ENCODE measurements at regions of chr6 and their contacts with region 1.

Region 1: DNA sequence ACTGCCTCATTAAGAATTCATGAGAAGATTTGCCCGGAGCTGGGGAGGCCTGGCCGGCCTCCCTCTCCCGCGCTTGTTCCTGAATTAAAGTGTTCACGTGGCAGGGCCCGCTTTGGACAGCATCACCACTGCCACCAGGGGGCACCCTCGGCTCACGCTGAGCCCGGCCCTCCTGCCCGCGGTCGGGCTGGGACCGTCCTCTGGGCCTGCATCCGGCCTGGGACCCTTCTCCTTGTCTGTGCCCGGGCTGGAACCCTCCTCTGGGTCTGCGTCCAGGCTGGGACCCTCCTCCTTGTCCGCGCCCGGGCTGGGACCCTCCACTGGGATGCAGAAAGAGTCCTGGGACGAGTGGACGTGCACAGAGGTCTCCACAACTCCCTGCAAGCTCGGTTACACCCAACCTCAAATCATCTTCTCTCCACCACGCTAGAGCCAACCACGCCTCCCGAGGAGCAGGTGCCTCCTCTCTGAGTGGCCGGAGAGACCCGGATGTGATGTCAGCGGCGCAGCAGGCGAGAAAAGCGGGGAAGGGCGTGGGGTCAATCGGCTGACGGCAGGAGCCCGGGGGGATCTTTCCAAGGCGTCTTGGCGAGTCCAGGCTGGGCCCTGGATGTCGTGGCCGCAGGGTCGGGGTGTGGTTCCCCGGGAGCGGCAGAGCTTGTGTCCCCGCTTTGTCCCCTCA is 50.9 kb upstream of the DACT2 start:
- DNase-seq: peak; percentile 50 to 72
- ATAC-seq: peak; percentile 82 to 99; a peak in 5 of 6 replicates
- H3K4me3 ChIP-seq: no peak overlapping the region
- H3K27ac ChIP-seq: no peak overlapping the region
- H3K4me1 ChIP-seq: no peaks in the 10 kb centered on the region
- CTCF ChIP-seq: peak; percentile 71
- EP300 ChIP-seq: no peak
- POLR2A ChIP-seq: no peak
- RAD21 ChIP-seq: peak; percentile 85 to 87

Region 2: DNA sequence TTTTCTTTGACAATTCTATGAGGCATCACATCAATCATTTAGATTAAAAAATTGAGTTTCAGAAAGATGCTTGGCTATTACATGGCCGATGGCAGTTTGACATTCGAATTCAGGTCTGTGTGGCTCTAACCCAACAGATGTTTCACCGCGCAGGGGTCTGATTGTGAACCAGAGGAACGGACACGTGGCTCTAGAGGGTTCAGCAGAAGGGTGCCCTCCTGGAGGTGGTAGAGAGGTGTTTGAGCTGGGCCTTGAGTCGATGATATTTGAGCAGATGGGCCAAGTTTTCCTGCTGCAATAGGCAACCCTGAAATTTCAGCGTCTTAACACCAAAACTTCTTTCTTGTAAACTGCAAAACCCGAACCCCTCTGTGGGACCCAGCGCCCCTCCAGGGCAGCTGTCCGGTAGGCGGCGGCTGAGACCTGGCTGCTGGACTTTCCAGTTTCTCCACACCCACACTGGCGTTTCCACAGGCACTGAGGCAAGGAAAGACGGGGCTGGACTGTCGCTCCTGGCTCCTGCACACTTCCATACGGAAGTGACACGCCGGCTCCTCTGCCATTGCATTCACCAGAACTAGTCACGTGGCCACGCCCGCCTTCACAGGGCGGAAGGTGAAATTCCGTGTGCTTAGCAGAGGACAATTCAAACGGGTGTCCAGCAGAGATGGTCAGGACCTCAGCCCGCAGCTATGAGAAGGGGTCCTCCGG is 555.0 kb before region 1 on chr6:
- CTCF ChIA-PET with region 1: no interaction called
- POLR2A ChIA-PET with region 1: no interaction called
- DNase-seq: no peak
- ATAC-seq: no peak
- H3K4me3 ChIP-seq: no peak overlapping the region
- H3K27ac ChIP-seq: no peak overlapping the region
- H3K4me1 ChIP-seq: no peaks in the 10 kb centered on the region
- CTCF ChIP-seq: no peak
- EP300 ChIP-seq: no peak
- POLR2A ChIP-seq: no peak
- RAD21 ChIP-seq: no peak

Region 3: DNA sequence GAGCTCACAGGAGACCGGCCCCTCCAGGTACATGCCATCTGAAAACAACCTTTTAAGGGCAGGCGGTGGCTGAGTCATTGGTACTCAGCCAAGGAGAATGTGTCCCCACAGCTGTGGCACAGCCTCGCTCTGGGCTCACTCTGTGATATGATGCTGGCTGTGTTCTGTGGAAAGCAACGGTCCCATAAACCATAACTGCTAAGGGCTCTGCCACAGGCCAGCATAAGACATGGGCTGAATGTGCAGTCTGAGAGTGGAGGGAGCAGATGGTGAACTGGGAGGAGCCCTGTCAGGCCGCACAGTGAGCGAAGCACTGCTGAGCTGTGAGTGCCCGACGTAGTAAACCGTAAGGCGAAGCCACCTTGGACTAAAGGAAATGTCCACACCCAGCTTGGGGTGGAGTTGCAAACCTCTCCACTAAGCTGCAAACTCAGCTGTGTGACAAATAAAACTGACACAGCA is 507.4 kb after region 1 on chr6:
- CTCF ChIA-PET with region 1: interaction called, 34 read pairs
- POLR2A ChIA-PET with region 1: no interaction called
- DNase-seq: peak in 1 of 2 experiments; percentile 13
- ATAC-seq: peak; percentile 62 to 70; a peak in 5 of 6 replicates
- H3K4me3 ChIP-seq: no peak overlapping the region
- H3K27ac ChIP-seq: no peak overlapping the region
- H3K4me1 ChIP-seq: no peaks in the 10 kb centered on the region
- CTCF ChIP-seq: no peak
- EP300 ChIP-seq: no peak
- POLR2A ChIP-seq: no peak
- RAD21 ChIP-seq: no peak

Region 4: DNA sequence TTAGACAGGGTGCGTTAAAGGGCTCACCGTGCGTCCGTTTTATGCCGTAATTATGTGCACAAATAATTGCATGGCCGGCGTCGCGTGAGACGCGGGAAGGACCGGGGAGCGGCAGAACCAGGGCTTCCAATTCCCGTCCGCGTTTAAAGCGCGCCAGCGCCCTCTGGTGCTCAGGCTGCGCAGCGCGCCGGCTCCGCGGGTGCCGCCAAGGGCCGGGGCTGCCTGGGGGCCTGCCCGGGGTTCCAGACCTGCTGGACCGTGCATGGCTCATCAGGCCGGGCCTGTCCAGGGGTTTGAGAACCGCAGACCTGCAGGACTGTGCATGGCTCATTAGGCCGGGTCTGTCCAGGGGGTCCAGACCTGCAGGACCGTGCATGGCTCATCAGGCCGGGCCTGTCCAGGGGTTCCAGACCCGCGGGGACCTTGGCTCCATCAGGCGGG is 514.2 kb after region 1 on chr6:
- CTCF ChIA-PET with region 1: interaction called, 34 read pairs
- POLR2A ChIA-PET with region 1: no interaction called
- DNase-seq: peak; percentile 34 to 69
- ATAC-seq: peak; percentile 79 to 97
- H3K4me3 ChIP-seq: no peak overlapping the region
- H3K27ac ChIP-seq: no peak overlapping the region
- H3K4me1 ChIP-seq: no peaks in the 10 kb centered on the region
- CTCF ChIP-seq: peak; percentile 69
- EP300 ChIP-seq: no peak
- POLR2A ChIP-seq: no peak
- RAD21 ChIP-seq: peak; percentile 74 to 88

Region 5: GRCh38 chr6:168892031-168892430 is 521.6 kb after region 1 on chr6:
- CTCF ChIA-PET with region 1: interaction called, 11 read pairs
- POLR2A ChIA-PET with region 1: no interaction called
- DNase-seq: no peak
- ATAC-seq: no peak
- H3K4me3 ChIP-seq: no peak overlapping the region
- H3K27ac ChIP-seq: no peak overlapping the region
- H3K4me1 ChIP-seq: no peaks in the 10 kb centered on the region
- CTCF ChIP-seq: no peak
- EP300 ChIP-seq: no peak
- POLR2A ChIP-seq: no peak
- RAD21 ChIP-seq: no peak

Measured in A549 (cell line).